ENCODE measurements at regions of chr11 and their contacts with region 1.

Region 1: DNA sequence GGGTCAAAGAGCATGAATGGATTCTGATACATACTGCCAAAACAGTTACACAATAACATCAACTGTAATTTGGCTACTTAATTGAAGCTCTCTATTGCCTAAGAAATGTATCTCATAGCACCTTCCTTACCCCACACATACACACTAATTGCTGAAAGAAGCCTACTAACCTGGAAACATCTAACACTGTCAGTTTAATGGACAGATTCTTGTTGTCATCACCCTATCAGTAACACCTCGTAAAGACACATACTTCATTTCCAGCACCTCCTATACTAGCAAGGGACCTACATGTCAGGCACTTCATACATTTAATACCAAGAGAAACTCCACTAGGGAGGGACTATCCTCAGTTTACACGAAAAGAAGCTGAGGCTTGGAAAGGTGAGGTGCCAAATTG is 9.9 kb downstream of the NAP1L4 start:
- DNase-seq: no peak
- ATAC-seq: peak in 2 of 4 donors; percentile 50 to 52
- H3K4me3 ChIP-seq: no peak overlapping the region
- H3K27ac ChIP-seq: no peak overlapping the region
- H3K4me1 ChIP-seq: peaks cover 21% of the 10 kb centered on the region
- H3K27me3 ChIP-seq: no peaks in the 10 kb centered on the region
- CTCF ChIP-seq: no peak

Region 2: GRCh38 chr11:2077061-2077802 is 905.0 kb before region 1 on chr11:
- intact Hi-C with region 1: no loop called
- DNase-seq: no peak
- ATAC-seq: no peak
- H3K4me3 ChIP-seq: no peak overlapping the region
- H3K27ac ChIP-seq: no peak overlapping the region
- H3K4me1 ChIP-seq: peaks cover 4% of the 10 kb centered on the region
- H3K27me3 ChIP-seq: peaks cover 0 to 2% (median 2%) of the 10 kb centered on the region in 3 donors
- CTCF ChIP-seq: no peak

Region 3: DNA sequence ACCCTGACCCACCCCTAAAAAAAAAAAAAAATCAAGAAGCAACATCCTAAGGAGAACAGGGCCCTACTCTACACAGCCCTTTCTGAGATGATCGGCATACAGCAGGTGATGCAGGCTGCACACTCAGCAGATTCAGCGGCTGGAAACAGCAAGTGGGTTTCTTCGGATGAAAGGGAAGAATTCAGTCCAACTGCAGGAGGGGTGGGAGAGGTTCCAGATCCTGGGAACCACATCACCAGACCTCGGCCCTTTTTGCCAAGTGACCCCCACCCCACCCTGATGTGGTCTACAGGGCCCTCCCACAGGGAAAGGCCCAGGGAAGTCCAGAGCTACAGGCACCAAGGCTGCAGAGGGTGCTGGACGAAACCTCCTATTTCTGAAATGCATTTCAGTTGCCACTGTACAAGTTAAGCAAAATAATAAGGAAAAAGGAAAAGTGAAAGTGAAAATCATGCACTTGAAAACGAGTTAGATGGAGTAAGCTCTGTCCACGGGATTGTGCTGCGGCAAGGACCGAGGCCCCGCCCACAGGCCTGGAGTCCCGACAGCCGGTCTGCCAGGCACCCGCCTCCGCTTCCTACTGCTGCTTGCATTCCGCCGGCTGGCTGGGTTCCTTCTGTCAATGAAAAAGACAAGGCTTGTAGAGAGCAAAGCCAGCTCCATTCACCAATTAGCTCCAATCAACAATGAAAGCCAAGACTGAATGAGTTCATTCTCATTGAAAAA is 37.0 kb before region 1 on chr11:
- intact Hi-C with region 1: loop called in 1 of 2 experiments (anchors 5 kb)
- DNase-seq: peak; percentile 90 to 91
- ATAC-seq: peak; percentile 74 to 85 (median 80)
- H3K4me3 ChIP-seq: peak overlapping the region; percentile 47
- H3K27ac ChIP-seq: peak overlapping the region; percentile 57
- H3K4me1 ChIP-seq: peaks cover 21% of the 10 kb centered on the region
- H3K27me3 ChIP-seq: no peaks in the 10 kb centered on the region
- CTCF ChIP-seq: no peak

Measured in psoas muscle (tissue), 8 donors.